Activated CD8-positive, alpha-beta T cell treated with anti-CD3 and anti-CD28 coated beads, Interleukin-2, amount 10 ng/mL, durations not matched to agents 7 days and 5 days (primary cell): ENCODE measurements at regions of chr2 and their contacts with region 1.

Region 1: DNA sequence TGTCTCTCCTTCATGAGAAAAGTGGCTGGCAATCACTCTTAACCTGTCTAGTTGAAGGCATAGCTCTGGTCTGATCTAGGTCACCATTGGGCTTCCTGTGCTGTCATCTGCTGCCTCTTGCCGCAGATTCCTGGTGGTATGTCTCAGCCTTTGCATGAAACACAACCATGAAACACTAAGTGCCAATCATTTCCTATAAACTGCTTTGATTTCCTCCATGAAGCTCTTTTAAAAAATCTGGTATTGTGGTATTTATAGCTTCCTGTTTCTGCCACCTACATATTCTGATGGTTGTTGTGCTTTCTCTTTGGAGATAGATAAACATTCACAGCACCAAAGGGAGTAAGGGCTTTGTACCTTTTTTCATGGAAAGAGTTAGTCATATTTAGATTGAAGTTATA is 120.0 kb upstream of the EPC2 start:
- DNase-seq: peak; percentile 74
- ATAC-seq: peak; percentile 84
- H3K4me3 Mint-ChIP-seq: peak overlapping the region; percentile 17
- H3K27ac Mint-ChIP-seq: peak overlapping the region; percentile 87
- H3K4me1 Mint-ChIP-seq: peaks cover 75% of the 10 kb centered on the region
- H3K27me3 Mint-ChIP-seq: no peaks in the 10 kb centered on the region

Region 2: DNA sequence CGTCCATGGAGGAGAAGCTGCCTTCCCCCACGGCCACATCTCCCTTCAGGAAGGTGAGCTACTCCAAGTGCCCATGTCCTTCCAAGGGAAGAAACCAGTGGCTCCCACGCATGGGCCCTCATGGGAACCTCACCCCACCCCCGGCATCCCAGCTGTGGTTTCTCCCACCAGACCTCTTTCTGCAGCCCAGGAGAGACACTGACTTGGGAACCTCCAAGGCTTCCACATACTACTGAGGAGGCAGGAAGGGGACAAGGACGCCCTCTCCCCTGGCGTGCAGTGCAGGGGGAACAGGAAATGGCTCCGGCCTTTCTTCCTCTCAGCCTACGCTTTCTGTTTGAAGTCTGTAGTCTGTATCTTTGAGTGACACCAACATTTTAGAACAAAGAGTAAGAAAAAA is 15.5 kb after region 1 on chr2:
- CTCF ChIA-PET with region 1: interaction called, 17 read pairs
- POLR2A ChIA-PET with region 1: interaction called, 36 read pairs
- DNase-seq: peak; percentile 54
- ATAC-seq: peak; percentile 83
- H3K4me3 Mint-ChIP-seq: peak overlapping the region; percentile 34
- H3K27ac Mint-ChIP-seq: peak overlapping the region; percentile 87
- H3K4me1 Mint-ChIP-seq: peaks cover 28% of the 10 kb centered on the region
- H3K27me3 Mint-ChIP-seq: no peaks in the 10 kb centered on the region

Region 3: GRCh38 chr2:148546270-148546669 is 21.8 kb after region 1 on chr2:
- CTCF ChIA-PET with region 1: interaction called, 25 read pairs
- POLR2A ChIA-PET with region 1: interaction called, 36 read pairs
- DNase-seq: no peak
- ATAC-seq: peak; percentile 46
- H3K4me3 Mint-ChIP-seq: no peak overlapping the region
- H3K27ac Mint-ChIP-seq: peak overlapping the region; percentile 74
- H3K4me1 Mint-ChIP-seq: peaks cover 26% of the 10 kb centered on the region
- H3K27me3 Mint-ChIP-seq: no peaks in the 10 kb centered on the region

Region 4: GRCh38 chr2:148552675-148553331 is 28.3 kb after region 1 on chr2:
- CTCF ChIA-PET with region 1: interaction called, 25 read pairs
- POLR2A ChIA-PET with region 1: interaction called, 21 read pairs
- DNase-seq: peak; percentile 72
- ATAC-seq: peak; percentile 90
- H3K4me3 Mint-ChIP-seq: no peak overlapping the region
- H3K27ac Mint-ChIP-seq: no peak overlapping the region
- H3K4me1 Mint-ChIP-seq: no peaks in the 10 kb centered on the region
- H3K27me3 Mint-ChIP-seq: no peaks in the 10 kb centered on the region

Region 5: GRCh38 chr2:148590612-148591011 is 66.1 kb after region 1 on chr2:
- CTCF ChIA-PET with region 1: no interaction called
- POLR2A ChIA-PET with region 1: no interaction called
- DNase-seq: no peak
- ATAC-seq: no peak
- H3K4me3 Mint-ChIP-seq: no peak overlapping the region
- H3K27ac Mint-ChIP-seq: no peak overlapping the region
- H3K4me1 Mint-ChIP-seq: no peaks in the 10 kb centered on the region
- H3K27me3 Mint-ChIP-seq: peaks cover 4% of the 10 kb centered on the region

Region 6: GRCh38 chr2:148644883-148645538 is 120.5 kb after region 1 on chr2:
- CTCF ChIA-PET with region 1: interaction called, 4 read pairs
- POLR2A ChIA-PET with region 1: interaction called, 13 read pairs
- DNase-seq: peak; percentile 94
- ATAC-seq: peak; percentile 78
- H3K4me3 Mint-ChIP-seq: peak overlapping the region; percentile 87
- H3K27ac Mint-ChIP-seq: peak overlapping the region; percentile 97
- H3K4me1 Mint-ChIP-seq: peaks cover 31% of the 10 kb centered on the region
- H3K27me3 Mint-ChIP-seq: peaks cover 21% of the 10 kb centered on the region